ENCODE measurements at regions of chr6 and their contacts with region 1.

Region 1: GRCh38 chr6:73520688-73521350 is at the start of gene EEF1A1:
- DNase-seq: peak; percentile 99
- H3K4me3 ChIP-seq: peak within 1 kb of the TSS; percentile 100
- CTCF ChIP-seq: peak; percentile 2

Region 2: GRCh38 chr6:73504160-73504559 is 16.7 kb before region 1 on chr6:
- CTCF ChIA-PET with region 1: no interaction called
- POLR2A ChIA-PET with region 1: no interaction called
- DNase-seq: no peak
- H3K4me3 ChIP-seq: no peak overlapping the region
- CTCF ChIP-seq: no peak

Region 3: DNA sequence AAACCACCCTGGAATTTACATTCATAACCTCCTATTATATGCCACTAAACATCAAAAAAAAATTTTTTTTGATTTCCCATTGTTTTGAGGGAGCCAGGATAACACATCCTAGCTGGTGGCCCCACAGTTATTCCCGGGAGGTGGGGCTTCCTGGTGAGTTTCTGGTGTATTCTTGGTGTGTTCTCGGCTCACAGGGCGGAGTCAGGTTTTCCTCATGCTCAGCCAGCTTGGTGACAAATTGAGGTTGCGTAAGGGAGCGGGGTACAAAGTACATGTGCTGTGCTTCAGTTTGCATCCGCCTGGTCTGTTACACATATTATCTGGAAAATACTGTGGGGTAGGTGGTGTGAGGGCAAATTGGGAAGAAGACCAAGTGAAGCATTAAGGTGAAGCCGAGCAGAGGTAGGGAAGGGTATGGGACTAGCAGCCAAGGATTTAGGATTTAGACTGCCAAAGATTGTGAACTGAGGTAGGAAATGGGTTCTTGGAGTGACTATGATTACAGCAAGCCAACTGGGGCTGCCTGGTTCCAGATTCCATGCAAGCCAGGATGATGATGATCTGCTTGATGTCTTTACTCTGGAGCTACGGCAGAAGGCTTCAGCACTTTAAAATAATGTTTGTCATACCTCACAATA is 46.3 kb after region 1 on chr6:
- CTCF ChIA-PET with region 1: no interaction called
- POLR2A ChIA-PET with region 1: interaction called, 14 read pairs
- DNase-seq: no peak
- H3K4me3 ChIP-seq: no peak overlapping the region
- CTCF ChIP-seq: no peak

Region 4: GRCh38 chr6:73585566-73586415 is 65.0 kb after region 1 on chr6:
- CTCF ChIA-PET with region 1: interaction called, 9 read pairs
- POLR2A ChIA-PET with region 1: interaction called, 97 read pairs
- DNase-seq: no peak
- H3K4me3 ChIP-seq: peak overlapping the region; percentile 7
- CTCF ChIP-seq: no peak

Region 5: DNA sequence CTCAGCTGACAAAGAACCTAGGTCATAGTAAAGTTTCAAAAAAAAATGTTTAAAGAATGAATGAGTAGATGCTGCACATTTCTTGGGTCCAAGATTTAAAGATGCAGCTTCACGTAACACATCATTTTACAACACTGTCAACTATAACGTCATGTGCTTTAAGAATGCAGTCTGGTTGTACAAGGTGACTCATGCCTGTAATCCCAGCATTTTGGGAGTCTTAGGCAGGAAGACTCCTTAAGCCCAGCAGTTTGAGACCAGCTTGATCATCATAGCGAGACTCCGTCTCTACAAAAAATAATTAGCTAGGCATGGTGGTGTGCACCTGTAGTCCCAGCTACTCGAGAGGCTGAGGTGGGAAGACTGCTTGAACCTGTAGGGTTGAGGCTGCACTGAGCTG is 111.0 kb after region 1 on chr6:
- CTCF ChIA-PET with region 1: no interaction called
- POLR2A ChIA-PET with region 1: interaction called, 16 read pairs
- DNase-seq: no peak
- H3K4me3 ChIP-seq: no peak overlapping the region
- CTCF ChIP-seq: no peak

Measured in AG04449 (cell line).